Endothelial cell of umbilical vein (primary cell): ENCODE measurements at regions of chr15 and their contacts with region 1.

Region 1: DNA sequence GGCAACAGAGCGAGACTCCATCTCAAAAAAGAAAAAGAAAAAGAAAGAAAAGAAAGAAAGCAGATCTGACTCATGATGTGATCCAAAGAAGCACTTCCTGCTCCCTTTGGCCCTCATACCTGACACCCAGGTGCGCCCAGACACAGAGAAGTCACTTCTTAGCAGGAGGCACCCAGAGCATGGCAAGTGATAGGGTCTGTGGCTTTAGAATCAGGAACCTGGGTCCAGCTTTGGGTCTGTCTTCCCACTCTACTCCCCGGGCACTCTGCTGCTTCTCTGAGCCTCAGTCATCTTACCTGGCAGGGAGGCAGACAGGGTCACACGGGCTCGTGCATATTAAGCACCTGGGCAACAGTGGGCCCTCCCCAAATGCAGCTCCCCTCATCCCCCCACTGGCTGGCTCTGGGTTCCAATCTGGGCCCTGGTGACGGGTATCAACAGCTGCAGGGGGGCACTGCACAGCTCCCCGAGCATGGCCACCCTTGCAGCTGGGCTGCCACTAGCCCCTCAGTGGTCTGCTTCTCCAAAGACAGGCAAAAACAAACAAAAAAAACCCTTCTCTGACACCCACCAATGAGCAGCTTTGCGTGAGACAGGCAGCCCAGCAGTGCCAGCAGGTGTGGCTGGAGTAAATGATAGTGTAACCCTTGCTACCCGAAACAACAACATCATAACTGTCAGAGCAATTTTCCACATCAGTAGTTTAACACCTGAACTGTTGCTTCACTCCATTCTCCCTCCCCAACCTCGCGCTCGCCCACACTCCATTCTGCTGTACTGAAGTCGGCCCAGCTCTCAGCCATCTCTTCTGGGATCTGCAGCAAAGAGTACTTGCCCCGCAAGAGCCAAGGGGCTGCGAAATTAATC is 99.8 kb downstream of the MEGF11 start:
- DNase-seq: no peak
- H3K4me3 ChIP-seq: no peak overlapping the region
- H3K27ac ChIP-seq: no peak overlapping the region
- H3K4me1 ChIP-seq: no peaks in the 10 kb centered on the region
- H3K27me3 ChIP-seq: peaks cover 0 to 2% of the 10 kb centered on the region in 2 experiments
- CTCF ChIP-seq: no peak
- POLR2A ChIP-seq: no peak

Region 2: GRCh38 chr15:66172324-66172980 is 18.7 kb after region 1 on chr15:
- CTCF ChIA-PET with region 1: interaction called, 3 read pairs
- POLR2A ChIA-PET with region 1: interaction called, 13 read pairs
- dilution Hi-C with region 1: no loop called
- intact Hi-C with region 1: no loop called
- DNase-seq: no peak
- H3K4me3 ChIP-seq: no peak overlapping the region
- H3K27ac ChIP-seq: no peak overlapping the region
- H3K4me1 ChIP-seq: no peaks in the 10 kb centered on the region
- H3K27me3 ChIP-seq: peaks cover 7 to 13% of the 10 kb centered on the region in 2 experiments
- CTCF ChIP-seq: no peak
- POLR2A ChIP-seq: no peak